Thyroid gland (tissue), 4 donors: ENCODE measurements at regions of chr4 and their contacts with region 1.

Region 1: GRCh38 chr4:93865650-93866049 is 37.1 kb downstream of the ATOH1 start:
- DNase-seq: no peak
- H3K4me3 ChIP-seq: no peak overlapping the region
- H3K27ac ChIP-seq: no peak overlapping the region
- H3K4me1 ChIP-seq: no peaks in the 10 kb centered on the region
- H3K27me3 ChIP-seq: no peaks in the 10 kb centered on the region
- CTCF ChIP-seq: no peak
- POLR2A ChIP-seq: no peak

Region 2: GRCh38 chr4:93843772-93844171 is 21.9 kb before region 1 on chr4:
- intact Hi-C with region 1: loop called (anchors 2 kb)
- DNase-seq: no peak
- H3K4me3 ChIP-seq: no peak overlapping the region
- H3K27ac ChIP-seq: no peak overlapping the region
- H3K4me1 ChIP-seq: no peaks in the 10 kb centered on the region
- H3K27me3 ChIP-seq: no peaks in the 10 kb centered on the region
- CTCF ChIP-seq: no peak
- POLR2A ChIP-seq: no peak